ENCODE measurements at regions of chr1 and their contacts with region 1.

Region 1: DNA sequence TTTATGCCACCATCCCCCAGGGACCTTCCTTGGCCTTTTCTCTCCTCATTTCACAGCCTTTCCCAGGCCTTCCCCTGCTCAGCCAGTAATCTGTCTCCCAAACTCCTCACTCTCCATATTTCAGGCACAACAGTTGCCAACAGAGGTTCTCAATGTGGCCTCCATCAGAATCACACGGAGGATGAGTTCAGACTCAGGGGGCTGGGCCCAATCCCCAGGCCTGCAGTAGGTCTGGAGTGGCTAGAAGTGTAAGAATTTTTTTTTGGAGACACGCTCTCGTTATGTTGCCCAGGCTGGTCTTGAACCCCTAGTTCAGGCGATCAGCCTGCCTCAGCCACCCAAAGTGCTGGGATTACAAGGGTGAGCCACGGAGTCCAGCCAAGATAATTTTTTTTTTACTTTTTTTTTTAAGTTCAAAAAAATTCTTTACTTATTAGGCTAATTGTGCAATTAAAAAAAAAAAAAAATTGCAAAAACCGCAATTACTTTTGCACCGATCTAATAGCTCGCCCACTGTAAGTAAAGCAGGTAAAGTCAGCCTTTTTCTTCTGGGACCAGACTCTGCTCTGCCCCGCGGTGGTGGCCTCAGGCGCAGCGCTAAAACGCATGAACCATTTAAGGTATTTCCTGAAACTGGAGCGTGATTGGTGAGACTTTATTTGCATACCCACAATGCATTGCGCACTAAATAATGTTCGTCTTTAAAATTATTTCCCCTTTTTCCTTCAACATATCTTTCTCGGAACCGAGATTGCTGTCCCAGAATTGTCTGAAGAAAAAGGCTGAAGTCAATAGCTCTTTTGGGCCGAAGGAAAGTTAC is 18.7 kb downstream of the KIAA2013 start:
- DNase-seq: peak; percentile 96
- H3K4me3 ChIP-seq: peak overlapping the region in 2 of 4 experiments; percentile 25 to 61; a peak in 2 of 8 replicates
- H3K27ac ChIP-seq: peak overlapping the region; percentile 100
- H3K4me1 ChIP-seq: peaks cover 0 to 4% (median 1%) of the 10 kb centered on the region in 4 experiments; a peak in 3 of 7 replicates
- H3K27me3 ChIP-seq: no peaks in the 10 kb centered on the region
- CTCF ChIP-seq: peak; percentile 74 to 89 (median 75)
- EP300 ChIP-seq: no peak
- POLR2A ChIP-seq: no peak
- RAD21 ChIP-seq: peak; percentile 63 to 64

Region 2: GRCh38 chr1:11693024-11693590 is 214.4 kb before region 1 on chr1:
- CTCF ChIA-PET with region 1: no interaction called
- POLR2A ChIA-PET with region 1: interaction called, 11 read pairs
- DNase-seq: no peak
- H3K4me3 ChIP-seq: peak overlapping the region in 3 of 4 experiments; percentile 75 to 99 (median 79); a peak in 4 of 8 replicates
- H3K27ac ChIP-seq: no peak overlapping the region
- H3K4me1 ChIP-seq: peaks cover 8 to 38% (median 26%) of the 10 kb centered on the region in 4 experiments
- H3K27me3 ChIP-seq: peaks cover 0 to 2% (median 0%) of the 10 kb centered on the region in 4 experiments; a peak in 2 of 7 replicates
- CTCF ChIP-seq: no peak
- EP300 ChIP-seq: no peak
- POLR2A ChIP-seq: 0 out of 3 replicates have a peak, but pooled peaks of 1 of the 2 experiments have one; percentile 8
- RAD21 ChIP-seq: no peak

Region 3: DNA sequence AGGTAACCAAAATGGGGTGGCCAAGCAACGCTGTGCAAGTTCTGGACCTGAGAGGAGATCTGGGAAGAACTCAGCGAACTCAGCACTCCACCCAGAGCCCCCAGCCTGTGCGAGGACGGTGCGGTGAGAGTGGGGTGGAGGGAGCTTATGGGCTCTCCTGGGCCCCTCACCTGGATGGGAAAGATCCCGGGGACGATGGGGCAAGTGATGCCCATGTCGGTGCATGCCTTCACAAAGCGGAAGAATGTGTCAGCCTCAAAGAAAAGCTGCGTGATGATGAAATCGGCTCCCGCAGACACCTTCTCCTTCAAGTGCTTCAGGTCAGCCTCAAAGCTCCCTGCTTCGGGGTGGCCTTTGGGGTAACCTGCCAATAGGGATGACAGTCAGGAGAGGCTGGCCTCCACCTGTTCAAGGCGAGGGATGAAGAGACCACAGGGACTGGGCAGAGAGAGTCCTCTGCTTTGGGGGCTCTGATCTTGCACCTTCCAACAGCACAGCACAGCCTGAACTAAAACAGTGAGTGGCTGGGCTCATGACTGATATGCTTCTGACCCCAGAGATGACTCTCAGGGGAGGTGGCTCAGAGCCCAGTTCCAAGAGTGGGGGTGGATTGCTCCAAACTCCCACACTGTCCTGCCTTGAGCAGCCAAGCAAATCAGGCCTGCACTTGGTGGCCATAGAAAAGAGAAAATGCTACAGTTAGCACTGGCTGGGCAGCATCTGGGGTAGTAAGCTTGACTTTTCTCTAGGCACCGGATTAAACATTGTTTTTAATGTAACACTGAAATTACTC is 111.3 kb before region 1 on chr1:
- CTCF ChIA-PET with region 1: no interaction called
- POLR2A ChIA-PET with region 1: no interaction called
- DNase-seq: no peak
- H3K4me3 ChIP-seq: no peak overlapping the region
- H3K27ac ChIP-seq: no peak overlapping the region
- H3K4me1 ChIP-seq: no peaks in the 10 kb centered on the region
- H3K27me3 ChIP-seq: no peaks in the 10 kb centered on the region
- CTCF ChIP-seq: no peak
- EP300 ChIP-seq: no peak
- POLR2A ChIP-seq: no peak
- RAD21 ChIP-seq: no peak

Region 4: DNA sequence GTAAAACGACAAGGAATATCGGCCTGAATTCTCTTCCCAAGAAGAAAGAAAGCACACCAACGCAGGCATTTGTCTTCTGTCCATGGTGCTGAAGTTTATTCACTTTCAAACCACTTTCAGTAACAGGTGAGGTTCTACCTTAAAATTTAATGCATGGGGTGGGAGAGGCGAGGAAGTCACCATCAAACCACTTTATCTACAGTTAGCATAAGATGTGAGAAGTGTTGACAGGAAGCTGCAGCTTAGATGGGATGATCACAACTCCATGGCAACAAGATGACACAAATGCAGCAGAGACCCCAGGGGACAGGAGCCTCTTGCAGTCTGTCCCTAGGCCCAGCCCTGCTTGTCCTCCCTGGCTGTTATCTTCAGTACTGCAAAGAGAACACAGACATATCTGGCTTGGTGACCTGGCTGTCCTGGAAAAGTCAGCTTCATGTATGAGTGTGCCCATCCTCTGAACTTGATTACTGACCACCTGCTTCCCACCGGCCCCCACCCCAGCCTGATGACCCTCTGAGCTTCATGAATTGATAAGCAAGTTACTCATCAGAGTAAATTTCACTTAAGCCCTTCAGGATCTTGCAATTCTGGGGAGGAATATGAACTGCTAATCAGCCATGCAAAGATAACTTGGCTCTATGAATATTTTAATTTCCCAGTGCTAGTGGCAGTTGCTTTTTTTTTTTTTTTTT is 61.7 kb before region 1 on chr1:
- CTCF ChIA-PET with region 1: interaction called, 5 read pairs
- POLR2A ChIA-PET with region 1: interaction called, 72 read pairs
- DNase-seq: no peak
- H3K4me3 ChIP-seq: no peak overlapping the region
- H3K27ac ChIP-seq: no peak overlapping the region
- H3K4me1 ChIP-seq: no peaks in the 10 kb centered on the region
- H3K27me3 ChIP-seq: no peaks in the 10 kb centered on the region
- CTCF ChIP-seq: peak in 1 of 3 experiments; percentile 18; a peak in 1 of 4 replicates
- EP300 ChIP-seq: no peak
- POLR2A ChIP-seq: no peak
- RAD21 ChIP-seq: no peak

Region 5: DNA sequence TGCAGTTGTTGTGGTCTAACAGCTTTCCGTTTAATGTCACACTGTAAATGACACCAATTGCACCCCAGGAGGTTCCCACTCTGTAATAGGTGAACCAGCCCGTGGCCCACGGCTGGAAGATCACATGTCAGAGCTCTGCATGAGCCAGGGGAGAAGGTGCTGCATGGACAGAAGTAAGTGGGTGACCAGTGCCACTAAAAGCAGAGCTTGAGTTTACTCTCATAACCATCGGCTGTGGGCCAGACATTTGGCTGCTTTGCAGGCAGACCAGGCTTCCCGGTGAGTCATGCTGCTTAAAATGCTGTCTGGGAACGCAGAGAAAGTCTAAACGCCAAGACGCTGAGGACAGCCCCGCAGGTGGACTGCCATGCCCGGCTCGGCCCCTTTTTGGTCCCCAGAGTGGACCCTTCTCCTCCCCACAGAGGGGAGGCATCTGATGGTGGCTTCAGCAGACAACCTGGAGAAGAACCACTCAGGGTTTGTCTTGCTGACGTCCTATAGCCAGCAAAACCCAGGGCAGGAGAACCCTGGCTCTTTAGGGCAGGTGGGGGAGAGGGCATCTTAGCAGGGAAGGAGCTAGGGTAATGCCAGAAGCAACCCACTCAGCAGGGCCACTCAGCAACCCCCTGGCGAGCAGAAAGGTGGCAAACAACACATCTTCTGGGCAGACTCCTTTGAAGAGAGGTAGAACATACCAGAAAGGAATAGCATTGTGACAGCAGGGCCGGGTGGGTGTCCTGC is 11.5 kb after region 1 on chr1:
- CTCF ChIA-PET with region 1: interaction called, 5 read pairs
- POLR2A ChIA-PET with region 1: interaction called, 130 read pairs
- DNase-seq: no peak
- H3K4me3 ChIP-seq: no peak overlapping the region
- H3K27ac ChIP-seq: no peak overlapping the region
- H3K4me1 ChIP-seq: 0 out of 7 replicates have a peak, but pooled peaks cover 0 to under 1% (median 0%) of the 10 kb centered on the region in 4 experiments
- H3K27me3 ChIP-seq: no peaks in the 10 kb centered on the region
- CTCF ChIP-seq: no peak
- EP300 ChIP-seq: no peak
- POLR2A ChIP-seq: no peak
- RAD21 ChIP-seq: no peak

Region 6: GRCh38 chr1:11955204-11955603 is 47.7 kb after region 1 on chr1:
- CTCF ChIA-PET with region 1: interaction called, 4 read pairs
- POLR2A ChIA-PET with region 1: interaction called, 220 read pairs
- DNase-seq: no peak
- H3K4me3 ChIP-seq: no peak overlapping the region
- H3K27ac ChIP-seq: no peak overlapping the region
- H3K4me1 ChIP-seq: no peaks in the 10 kb centered on the region
- H3K27me3 ChIP-seq: no peaks in the 10 kb centered on the region
- CTCF ChIP-seq: no peak
- EP300 ChIP-seq: no peak
- POLR2A ChIP-seq: no peak
- RAD21 ChIP-seq: no peak

Region 7: DNA sequence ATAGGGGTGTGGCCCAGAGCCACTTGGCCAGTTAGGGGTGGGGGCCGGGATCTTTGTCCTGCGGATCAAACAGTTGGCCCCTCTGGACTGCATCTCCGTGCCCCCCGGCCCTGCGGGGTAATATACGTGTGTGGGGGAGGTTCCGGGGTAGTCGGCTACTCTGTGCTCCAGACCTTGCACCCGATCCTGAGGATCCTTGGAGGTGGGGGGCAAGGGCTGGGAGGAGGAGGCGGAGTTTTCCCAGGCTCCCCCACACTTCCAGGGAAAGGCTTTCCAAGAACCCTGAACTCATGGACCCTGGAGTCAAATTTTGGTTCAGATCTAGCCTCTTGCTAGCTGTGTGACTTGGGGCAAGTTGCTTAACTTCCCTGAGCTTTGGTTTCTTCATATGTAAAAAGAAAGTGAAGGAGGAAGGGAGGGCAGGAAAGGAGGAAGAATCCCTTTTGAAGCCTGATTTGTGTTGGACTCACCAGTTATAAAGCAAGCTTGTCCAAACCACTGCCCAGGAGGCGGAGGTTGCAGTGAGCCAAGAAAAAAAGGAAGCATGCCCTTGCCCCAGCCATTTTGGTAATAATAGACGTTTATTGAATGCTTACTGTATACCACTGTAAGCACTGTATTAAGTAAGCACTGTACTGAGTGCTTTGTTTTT is 112.5 kb after region 1 on chr1:
- CTCF ChIA-PET with region 1: no interaction called
- POLR2A ChIA-PET with region 1: interaction called, 36 read pairs
- DNase-seq: no peak
- H3K4me3 ChIP-seq: peak overlapping the region; percentile 72 to 94 (median 77)
- H3K27ac ChIP-seq: peak overlapping the region; percentile 77; the same call in 1 of the 2 replicates
- H3K4me1 ChIP-seq: peaks cover 0 to 7% (median 0%) of the 10 kb centered on the region in 4 experiments; a peak in 4 of 7 replicates
- H3K27me3 ChIP-seq: no peaks in the 10 kb centered on the region
- CTCF ChIP-seq: no peak
- EP300 ChIP-seq: no peak
- POLR2A ChIP-seq: no peak
- RAD21 ChIP-seq: no peak

Region 8: GRCh38 chr1:12095452-12096263 is 188.2 kb after region 1 on chr1:
- CTCF ChIA-PET with region 1: no interaction called
- POLR2A ChIA-PET with region 1: no interaction called
- DNase-seq: no peak
- H3K4me3 ChIP-seq: no peak overlapping the region
- H3K27ac ChIP-seq: no peak overlapping the region
- H3K4me1 ChIP-seq: no peaks in the 10 kb centered on the region
- H3K27me3 ChIP-seq: no peaks in the 10 kb centered on the region
- CTCF ChIP-seq: no peak
- EP300 ChIP-seq: no peak
- POLR2A ChIP-seq: no peak
- RAD21 ChIP-seq: no peak